ENCODE measurements at regions of chr16 and their contacts with region 1.

Region 1: GRCh38 chr16:29943846-29944669 is 17.8 kb upstream of the TMEM219 start:
- DNase-seq: peak; percentile 97
- H3K4me3 ChIP-seq: no peak overlapping the region
- H3K27ac ChIP-seq: peak overlapping the region; percentile 81
- H3K4me1 ChIP-seq: peaks cover 14% of the 10 kb centered on the region
- H3K27me3 ChIP-seq: no peaks in the 10 kb centered on the region
- CTCF ChIP-seq: peak; percentile 24 to 40

Region 2: DNA sequence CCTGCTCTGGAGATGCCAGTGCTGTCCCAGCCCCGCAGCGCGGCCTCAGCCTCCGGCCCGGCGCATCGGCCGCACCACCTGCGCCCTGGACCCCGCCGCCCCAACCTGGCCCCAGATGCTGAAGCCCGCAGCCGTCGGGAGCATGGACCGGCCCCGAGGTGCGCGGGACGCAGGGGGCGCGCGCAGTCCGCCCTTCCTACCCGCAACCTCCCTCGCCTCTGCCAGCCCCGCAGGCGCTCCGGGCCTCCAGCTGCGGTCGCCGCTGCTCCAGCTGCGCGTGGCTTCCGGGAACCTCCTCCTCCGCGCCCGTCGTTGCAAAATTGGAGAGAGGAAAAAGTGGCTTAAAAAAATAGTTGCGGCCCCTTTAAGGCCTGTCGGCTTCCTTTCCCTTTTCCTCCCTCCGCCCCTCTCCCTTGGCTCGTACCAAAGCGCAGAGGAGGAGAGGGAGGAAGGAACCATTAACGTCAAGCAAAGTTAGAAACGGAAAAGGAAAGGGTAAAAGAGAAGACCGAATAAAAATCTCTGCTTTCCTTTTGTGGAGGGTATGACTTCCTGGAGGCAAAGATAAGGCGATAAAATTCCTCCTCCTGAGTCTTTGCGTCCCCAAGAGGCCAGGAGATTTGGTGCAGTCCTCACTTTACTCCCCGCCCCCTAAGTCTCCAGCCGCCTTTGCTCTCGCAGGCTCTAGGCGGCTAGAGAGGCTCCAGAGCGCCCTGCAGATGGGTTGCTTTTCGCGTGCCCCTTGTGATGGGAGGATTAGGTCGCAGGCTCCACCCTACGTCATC is 81.0 kb before region 1 on chr16 and contains the start of gene CDIPT:
- CTCF ChIA-PET with region 1: no interaction called
- dilution Hi-C with region 1: loop called (anchors 5 kb)
- in situ Hi-C with region 1: no loop called
- intact Hi-C with region 1: no loop called
- DNase-seq: peak; percentile 92
- H3K4me3 ChIP-seq: peak within 1 kb of the TSS; percentile 83 to 97 (median 89)
- H3K27ac ChIP-seq: peak within 1 kb of the TSS; percentile 98
- H3K4me1 ChIP-seq: peaks cover 3% of the 10 kb centered on the region
- H3K27me3 ChIP-seq: no peaks in the 10 kb centered on the region
- CTCF ChIP-seq: peak; percentile 58 to 72
- total RNA-seq, gene CDIPT: 47.8 to 72.2 TPM

Region 3: DNA sequence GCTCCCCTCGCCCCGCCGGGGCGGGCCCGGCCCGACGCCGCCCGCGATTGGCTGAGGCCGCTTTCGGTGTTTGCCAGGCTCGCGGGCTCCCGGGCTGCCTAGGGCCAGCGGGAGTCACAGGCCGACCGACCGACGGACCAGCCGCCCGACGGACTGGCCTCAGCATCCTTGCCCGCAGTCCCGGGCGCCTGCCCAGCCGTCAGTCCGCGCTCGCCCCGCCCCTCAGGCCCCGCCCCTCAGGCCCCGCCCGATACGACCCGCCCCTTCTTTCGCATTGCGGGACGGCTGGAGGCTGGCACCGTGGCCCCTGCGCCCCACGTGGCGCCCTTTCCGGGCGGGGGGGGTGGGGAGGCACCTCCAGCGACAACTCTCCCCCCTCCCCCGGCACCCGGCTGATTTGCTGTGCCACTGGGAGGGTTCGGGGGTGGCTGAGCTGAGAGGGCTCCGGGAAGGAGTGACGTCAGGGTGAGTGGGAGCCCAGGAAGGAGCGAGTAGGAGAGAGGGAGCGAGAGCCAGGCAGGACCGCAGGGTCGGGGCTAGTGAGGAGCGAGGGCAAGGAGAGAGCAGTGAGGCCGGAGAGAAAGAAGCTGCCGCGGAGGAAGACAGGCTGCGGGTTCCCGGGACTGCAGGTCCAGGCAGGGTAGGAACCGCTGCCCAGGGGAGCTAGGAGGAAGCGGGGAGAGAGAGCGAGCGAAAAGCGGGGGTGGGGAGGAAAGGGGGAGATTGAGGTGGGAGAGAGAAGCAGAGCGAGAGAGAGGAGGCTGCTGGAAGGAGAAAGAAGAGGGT is 43.8 kb before region 1 on chr16 and contains the start of gene ASPHD1:
- CTCF ChIA-PET with region 1: no interaction called
- dilution Hi-C with region 1: loop called (anchors 5 kb)
- in situ Hi-C with region 1: no loop called
- intact Hi-C with region 1: loop called (anchors 1 kb)
- DNase-seq: peak; percentile 84
- H3K4me3 ChIP-seq: peak within 1 kb of the TSS; percentile 61 to 70 (median 68)
- H3K27ac ChIP-seq: no peak within 1 kb of the TSS
- H3K4me1 ChIP-seq: peaks cover 21% of the 10 kb centered on the region
- H3K27me3 ChIP-seq: peaks cover 4% of the 10 kb centered on the region
- CTCF ChIP-seq: no peak
- total RNA-seq, gene ASPHD1: 1.5 to 14.7 TPM

Region 4: DNA sequence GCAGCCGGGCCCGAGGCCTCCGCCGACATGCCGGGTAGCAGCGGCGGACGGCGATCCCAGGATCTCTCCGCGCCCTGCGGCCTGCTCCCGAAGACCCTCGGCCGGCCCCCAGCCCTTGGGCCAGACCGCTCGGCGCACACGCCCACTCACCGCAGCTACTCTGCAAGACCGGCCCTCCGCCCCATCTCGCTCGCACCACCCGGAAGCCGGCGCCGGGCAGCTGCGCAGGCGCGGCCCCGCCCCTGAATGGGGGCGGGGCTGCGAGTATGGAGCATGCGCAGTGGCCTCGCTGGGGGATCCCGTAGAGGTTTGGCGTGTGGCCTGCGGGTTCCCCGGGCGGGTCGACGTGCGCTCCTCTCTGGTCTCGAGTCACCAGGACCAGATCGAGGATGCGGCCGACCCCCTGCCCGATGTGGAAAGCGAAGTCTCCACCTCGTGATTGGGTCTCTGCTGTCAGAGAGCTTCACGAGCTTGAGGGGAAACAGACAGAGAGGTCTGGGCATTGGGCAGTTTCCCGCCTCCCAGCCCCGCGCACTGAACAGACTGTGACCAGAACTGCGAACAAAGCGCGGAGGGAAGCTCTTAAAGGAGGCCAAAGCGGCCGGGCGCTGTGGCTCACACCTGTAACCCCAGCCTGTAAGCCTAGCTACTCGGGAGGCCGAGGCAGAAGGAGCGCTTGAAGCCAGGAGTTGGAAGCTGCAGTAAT is 17.9 kb before region 1 on chr16 and contains the start of gene KCTD13:
- CTCF ChIA-PET with region 1: no interaction called
- dilution Hi-C with region 1: no loop called
- in situ Hi-C with region 1: no loop called
- intact Hi-C with region 1: loop called (anchors 1 kb)
- DNase-seq: peak; percentile 80
- H3K4me3 ChIP-seq: peak within 1 kb of the TSS; percentile 40 to 98 (median 89)
- H3K27ac ChIP-seq: peak within 1 kb of the TSS; percentile 63
- H3K4me1 ChIP-seq: peaks cover 10% of the 10 kb centered on the region
- H3K27me3 ChIP-seq: no peaks in the 10 kb centered on the region
- CTCF ChIP-seq: no peak
- total RNA-seq, gene KCTD13: 11.8 to 27.4 TPM

Region 5: GRCh38 chr16:30040221-30040620 is 96.2 kb after region 1 on chr16:
- CTCF ChIA-PET with region 1: interaction called, 12 read pairs
- dilution Hi-C with region 1: no loop called
- in situ Hi-C with region 1: no loop called
- intact Hi-C with region 1: no loop called
- DNase-seq: no peak
- H3K4me3 ChIP-seq: no peak overlapping the region
- H3K27ac ChIP-seq: no peak overlapping the region
- H3K4me1 ChIP-seq: no peaks in the 10 kb centered on the region
- H3K27me3 ChIP-seq: no peaks in the 10 kb centered on the region
- CTCF ChIP-seq: no peak